ENCODE measurements at regions of chr7 and their contacts with region 1.

Region 1: GRCh38 chr7:24341677-24342076 is 57.7 kb downstream of the NPY start:
- DNase-seq: no peak
- ATAC-seq: no peak
- H3K4me3 ChIP-seq: no peak overlapping the region
- H3K4me3 Mint-ChIP-seq: no peak overlapping the region
- H3K27ac ChIP-seq: no peak overlapping the region
- H3K27ac Mint-ChIP-seq: no peak overlapping the region
- H3K4me1 ChIP-seq: no peaks in the 10 kb centered on the region
- H3K4me1 Mint-ChIP-seq: no peaks in the 10 kb centered on the region
- H3K27me3 ChIP-seq: no peaks in the 10 kb centered on the region
- H3K27me3 Mint-ChIP-seq: peaks cover 5 to 9% of the 10 kb centered on the region in 2 donors

Region 2: GRCh38 chr7:24395512-24395911 is 53.8 kb after region 1 on chr7:
- CTCF ChIA-PET with region 1: no interaction called
- POLR2A ChIA-PET with region 1: no interaction called
- DNase-seq: no peak
- ATAC-seq: no peak
- H3K4me3 ChIP-seq: no peak overlapping the region
- H3K4me3 Mint-ChIP-seq: no peak overlapping the region
- H3K27ac ChIP-seq: no peak overlapping the region
- H3K27ac Mint-ChIP-seq: no peak overlapping the region
- H3K4me1 ChIP-seq: no peaks in the 10 kb centered on the region
- H3K4me1 Mint-ChIP-seq: no peaks in the 10 kb centered on the region
- H3K27me3 ChIP-seq: no peaks in the 10 kb centered on the region
- H3K27me3 Mint-ChIP-seq: peaks cover 2 to 6% of the 10 kb centered on the region in 2 donors

Region 3: DNA sequence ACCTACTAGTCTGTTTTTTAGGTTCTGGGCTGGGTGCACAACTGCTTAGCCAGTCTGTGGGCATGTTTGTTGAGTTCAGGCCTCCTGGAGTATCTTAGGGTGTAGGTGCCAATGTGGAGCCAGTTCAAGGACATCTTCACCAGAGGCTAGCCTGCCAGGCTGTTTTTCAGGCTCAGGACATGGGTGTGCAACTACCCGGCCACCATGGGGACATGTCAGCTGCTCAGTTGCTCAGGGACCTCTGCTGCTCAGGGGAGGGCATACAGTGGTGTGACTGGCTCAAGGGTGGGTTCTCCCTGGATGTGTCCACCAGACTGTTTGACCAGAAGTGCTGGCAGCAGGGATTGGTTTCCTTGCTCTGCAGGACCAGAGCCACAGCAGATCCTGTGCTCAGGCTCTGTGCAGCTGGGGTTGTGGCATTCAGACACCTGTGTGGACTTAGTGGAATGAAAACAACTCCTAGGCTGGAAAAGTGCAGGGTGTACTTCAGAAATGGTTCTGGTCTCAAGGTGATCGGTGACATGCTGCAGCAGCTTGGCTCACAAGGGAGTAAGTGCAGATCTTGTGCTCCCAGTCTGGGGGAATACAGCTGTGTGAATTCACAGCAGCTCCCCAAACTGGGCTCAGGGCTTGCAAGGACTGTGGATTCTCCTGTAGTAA is 276.4 kb after region 1 on chr7:
- CTCF ChIA-PET with region 1: no interaction called
- POLR2A ChIA-PET with region 1: no interaction called
- DNase-seq: no peak
- ATAC-seq: no peak
- H3K4me3 ChIP-seq: no peak overlapping the region
- H3K4me3 Mint-ChIP-seq: no peak overlapping the region
- H3K27ac ChIP-seq: no peak overlapping the region
- H3K27ac Mint-ChIP-seq: no peak overlapping the region
- H3K4me1 ChIP-seq: no peaks in the 10 kb centered on the region
- H3K4me1 Mint-ChIP-seq: peaks cover 11 to 30% (median 16%) of the 10 kb centered on the region in 3 donors
- H3K27me3 ChIP-seq: no peaks in the 10 kb centered on the region
- H3K27me3 Mint-ChIP-seq: no peaks in the 10 kb centered on the region

Region 4: DNA sequence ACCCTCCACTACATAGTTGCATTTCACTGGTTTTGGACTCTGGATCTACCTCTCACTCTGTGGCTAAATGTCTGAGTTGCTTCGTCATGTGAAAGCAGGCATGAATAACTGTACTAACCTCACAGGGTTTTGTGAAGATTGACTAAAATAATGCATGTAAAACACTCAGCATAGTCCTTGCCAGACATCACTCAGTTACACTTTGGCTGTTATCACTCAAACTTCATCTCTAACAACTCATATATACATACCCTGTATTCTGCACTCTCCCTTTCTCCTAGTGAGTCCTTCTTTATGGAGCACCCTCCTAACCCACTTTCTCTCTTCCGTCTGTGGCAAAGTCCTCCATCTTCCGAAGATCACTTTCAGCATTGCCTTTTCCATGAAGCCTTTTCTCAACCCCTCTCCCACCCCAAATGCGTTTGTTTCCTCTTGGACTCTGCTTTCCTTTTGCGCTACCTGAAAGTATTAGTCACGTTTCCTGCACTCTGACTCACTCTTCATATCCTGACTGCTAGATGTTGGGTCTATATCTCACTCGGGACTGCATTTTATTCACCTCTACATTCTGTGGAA is 565.7 kb after region 1 on chr7:
- CTCF ChIA-PET with region 1: interaction called in 1 of 2 experiments, 10 read pairs
- POLR2A ChIA-PET with region 1: no interaction called
- DNase-seq: peak in 2 of 35 experiments; percentile 32 to 55
- ATAC-seq: peak; percentile 65 to 87 (median 84)
- H3K4me3 ChIP-seq: peak overlapping the region in 1 of 2 donors; percentile 16
- H3K4me3 Mint-ChIP-seq: no peak overlapping the region
- H3K27ac ChIP-seq: peak overlapping the region; percentile 55
- H3K27ac Mint-ChIP-seq: no peak overlapping the region
- H3K4me1 ChIP-seq: peaks cover 37 to 65% of the 10 kb centered on the region in 2 experiments
- H3K4me1 Mint-ChIP-seq: peaks cover 37 to 40% (median 39%) of the 10 kb centered on the region in 3 donors
- H3K27me3 ChIP-seq: no peaks in the 10 kb centered on the region
- H3K27me3 Mint-ChIP-seq: no peaks in the 10 kb centered on the region

Measured in T-cell (primary cell).